Esophagus squamous epithelium (tissue), 5 donors: ENCODE measurements at regions of chr3 and their contacts with region 1.

Region 1: DNA sequence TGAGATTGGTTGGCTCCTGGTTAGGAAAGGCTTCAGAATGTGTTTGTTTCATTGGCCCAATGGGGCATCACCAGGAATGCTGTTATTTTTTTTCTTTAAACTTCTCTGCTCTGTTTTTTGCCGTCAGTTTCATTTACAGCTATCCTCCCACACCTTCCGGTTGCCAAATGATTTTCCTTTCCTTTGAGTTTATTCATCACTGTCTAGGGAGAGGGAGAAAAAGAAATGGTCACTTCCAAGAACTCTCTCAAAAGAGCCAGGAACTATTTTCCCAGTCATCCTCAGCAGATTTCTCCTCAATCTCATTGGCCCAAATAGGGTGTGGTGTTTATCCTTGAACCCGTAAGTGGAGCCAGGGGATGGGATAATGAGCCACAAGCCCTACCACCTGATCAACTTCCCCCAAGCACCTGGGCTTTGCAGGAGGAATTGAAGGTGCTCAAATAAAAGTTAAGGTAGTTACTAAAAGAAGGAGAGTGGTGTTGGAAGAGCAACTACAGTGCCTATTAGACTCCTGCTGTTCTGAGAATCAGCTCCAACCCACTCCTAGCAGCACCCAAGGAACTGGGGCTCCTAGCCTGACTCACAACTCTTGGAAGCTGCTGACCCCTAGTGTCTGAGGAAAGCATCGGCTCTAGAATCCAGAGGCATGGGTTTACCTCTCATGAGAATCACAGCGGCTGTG is 183.8 kb upstream of the IL12A start:
- DNase-seq: no peak
- H3K4me3 ChIP-seq: peak overlapping the region in 1 of 4 donors; percentile 31
- H3K27ac ChIP-seq: peak overlapping the region in 3 of 4 donors; percentile 46 to 66 (median 54)
- H3K4me1 ChIP-seq: peaks cover 0 to 53% (median 34%) of the 10 kb centered on the region in 3 donors
- H3K27me3 ChIP-seq: no peaks in the 10 kb centered on the region
- CTCF ChIP-seq: peak; percentile 38 to 89 (median 80)
- POLR2A ChIP-seq: no peak

Region 2: GRCh38 chr3:159260049-159260662 is 544.7 kb before region 1 on chr3:
- intact Hi-C with region 1: loop called (anchors 10 kb)
- DNase-seq: no peak
- H3K4me3 ChIP-seq: no peak overlapping the region
- H3K27ac ChIP-seq: no peak overlapping the region
- H3K4me1 ChIP-seq: no peaks in the 10 kb centered on the region
- H3K27me3 ChIP-seq: peaks cover 0 to 7% (median 0%) of the 10 kb centered on the region in 4 donors
- CTCF ChIP-seq: peak; percentile 34 to 78 (median 66)
- POLR2A ChIP-seq: no peak

Region 3: DNA sequence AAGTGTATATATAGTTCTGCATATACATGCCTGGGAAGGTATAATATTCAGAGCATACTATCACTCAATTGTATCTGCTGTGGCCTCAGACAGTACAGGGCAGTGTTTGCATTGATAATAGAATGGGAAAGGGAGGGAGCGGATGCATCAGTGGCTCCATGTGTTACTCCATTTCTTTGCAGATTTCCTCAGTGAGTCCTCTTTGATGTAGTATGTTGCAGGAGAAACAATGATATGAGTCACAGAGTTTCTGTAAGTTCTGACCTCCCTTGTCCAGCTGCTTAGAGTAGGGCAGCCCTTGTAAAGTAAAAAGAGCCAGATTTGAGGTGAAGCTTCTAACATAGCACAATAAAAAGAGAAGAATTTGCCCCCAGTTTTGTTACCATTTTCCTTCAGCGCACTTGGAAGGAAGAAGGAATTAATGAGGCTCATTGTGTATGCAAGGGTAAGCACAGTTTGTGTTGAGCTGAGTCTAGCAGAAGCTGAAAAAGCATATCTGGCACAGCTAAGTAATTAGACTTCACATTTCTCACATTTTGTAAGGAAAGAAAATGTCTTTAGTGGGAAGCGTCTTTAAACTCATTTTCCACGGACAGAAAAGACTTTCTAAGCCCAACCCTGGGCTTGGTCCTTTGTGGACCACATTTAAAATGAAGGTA is 372.1 kb before region 1 on chr3:
- intact Hi-C with region 1: no loop called
- DNase-seq: no peak
- H3K4me3 ChIP-seq: no peak overlapping the region
- H3K27ac ChIP-seq: no peak overlapping the region
- H3K4me1 ChIP-seq: no peaks in the 10 kb centered on the region
- H3K27me3 ChIP-seq: no peaks in the 10 kb centered on the region
- CTCF ChIP-seq: no peak
- POLR2A ChIP-seq: no peak

Region 4: DNA sequence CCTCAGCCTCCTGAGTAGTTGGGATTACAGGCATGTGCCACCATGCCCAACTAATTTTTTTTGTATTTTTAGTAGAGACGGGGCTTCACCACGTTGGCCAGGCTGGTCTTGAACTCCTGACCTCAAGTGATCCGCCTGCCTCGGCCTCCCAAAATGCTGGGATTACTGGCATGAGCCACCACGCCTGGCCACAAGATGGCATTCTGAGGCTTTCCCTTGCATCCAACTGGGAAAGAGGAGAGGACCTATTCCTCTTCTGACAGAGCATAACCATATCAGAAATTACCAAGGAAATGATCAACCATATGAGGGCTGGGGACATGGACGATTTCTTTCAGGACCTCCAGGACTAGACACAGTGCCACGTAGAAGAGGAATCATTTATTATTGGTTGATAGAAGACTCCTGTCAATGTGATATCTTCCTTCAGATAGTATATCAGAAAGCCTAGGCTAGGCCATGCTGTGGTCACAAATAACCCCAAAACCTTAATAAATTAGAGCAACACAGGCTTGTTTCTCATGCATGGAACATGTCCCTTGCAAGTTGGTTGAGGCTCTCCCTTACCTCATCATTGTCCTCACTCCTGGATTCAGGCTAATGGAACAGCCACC is 188.5 kb before region 1 on chr3:
- intact Hi-C with region 1: loop called (anchors 10 kb)
- DNase-seq: no peak
- H3K4me3 ChIP-seq: no peak overlapping the region
- H3K27ac ChIP-seq: no peak overlapping the region
- H3K4me1 ChIP-seq: no peaks in the 10 kb centered on the region
- H3K27me3 ChIP-seq: no peaks in the 10 kb centered on the region
- CTCF ChIP-seq: peak in 5 of 6 experiments; percentile 41 to 67 (median 51)
- POLR2A ChIP-seq: no peak